ENCODE measurements at regions of chr19 and their contacts with region 1.

Region 1: DNA sequence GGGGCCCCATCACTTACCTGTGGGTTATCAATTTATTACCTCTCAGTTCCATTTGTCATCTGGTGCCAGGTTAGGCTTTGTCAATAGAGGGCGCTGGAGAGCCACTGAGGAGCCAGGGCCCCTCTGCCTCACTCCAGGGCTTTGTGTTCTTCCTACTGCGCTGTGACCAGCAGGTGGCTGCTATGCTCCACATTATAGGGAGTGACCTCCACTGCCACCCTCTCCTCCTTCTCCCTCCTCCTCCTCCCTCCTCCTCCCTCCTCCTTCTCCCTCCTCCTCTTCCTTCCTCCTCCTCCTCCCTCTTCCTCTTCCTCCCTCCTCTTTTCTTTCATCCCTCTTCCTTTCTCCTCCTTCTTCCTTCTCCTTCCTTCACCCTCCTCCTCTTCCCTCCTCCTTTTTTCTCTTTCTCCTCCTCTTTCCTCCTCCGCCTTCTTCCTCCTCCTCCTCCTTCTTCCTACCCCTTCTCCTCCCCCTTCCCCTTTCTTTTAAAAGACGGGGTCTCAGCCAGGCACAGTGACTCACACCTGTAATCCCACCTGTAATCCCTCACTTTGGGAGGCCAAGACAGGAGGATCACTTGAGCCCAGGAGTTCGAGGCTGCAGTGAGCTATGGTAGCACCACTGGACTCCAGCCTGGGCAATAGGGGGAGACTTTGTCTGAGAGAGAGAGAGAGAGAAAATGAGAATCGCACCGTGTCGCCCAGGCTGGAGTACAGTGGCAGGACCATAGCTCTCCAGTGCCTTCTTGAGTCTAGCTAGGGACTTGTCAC is 10.3 kb upstream of the ZBTB32 start:
- H3K4me3 ChIP-seq: no peak overlapping the region
- H3K27ac ChIP-seq: no peak overlapping the region
- H3K4me1 ChIP-seq: no peaks in the 10 kb centered on the region
- CTCF ChIP-seq: peak; percentile 100

Region 2: DNA sequence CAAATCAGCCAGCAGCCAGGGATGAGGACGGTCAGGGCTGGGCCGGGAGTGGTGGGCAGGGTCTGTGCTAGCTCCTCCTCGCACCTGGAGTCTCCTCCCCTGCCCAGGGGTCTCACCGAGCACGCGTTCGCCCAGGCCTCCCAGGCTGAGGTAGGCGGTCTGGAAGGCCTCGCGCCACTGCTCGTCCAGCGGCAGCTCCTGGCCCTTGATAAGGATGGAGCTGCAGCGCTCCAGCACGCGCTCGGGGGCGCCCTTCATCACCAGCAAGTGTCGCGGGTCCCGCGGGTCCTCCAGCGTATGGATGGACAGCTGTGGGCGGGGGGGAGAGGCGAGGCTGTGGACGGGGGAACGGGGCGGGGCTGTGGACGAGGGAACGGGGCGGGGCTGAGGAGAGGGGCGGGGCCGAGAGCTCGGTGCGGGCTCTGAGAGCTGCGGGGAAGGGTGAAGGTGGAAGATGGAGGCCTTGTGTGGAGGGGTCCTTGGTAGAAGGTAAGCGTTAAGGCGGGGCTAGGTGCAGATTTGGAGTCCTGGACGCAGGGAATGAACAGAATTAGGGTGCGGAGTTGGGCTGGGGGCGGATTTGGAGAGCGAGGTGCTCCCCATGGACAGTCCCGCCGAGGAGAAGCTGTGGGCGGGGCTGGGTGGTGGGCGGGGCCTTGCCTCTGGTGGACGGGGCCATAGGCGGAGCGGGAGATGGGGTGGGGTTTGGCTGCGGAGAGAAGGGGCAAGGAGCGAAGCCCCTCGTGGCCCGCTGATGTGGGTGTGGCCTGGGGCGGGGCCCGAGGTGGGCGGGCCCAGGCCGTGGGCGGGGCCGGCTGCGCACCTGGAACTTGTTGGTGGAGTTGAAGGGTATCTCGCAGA is 136.2 kb before region 1 on chr19:
- CTCF ChIA-PET with region 1: interaction called, 16 read pairs
- POLR2A ChIA-PET with region 1: no interaction called
- H3K4me3 ChIP-seq: peak overlapping the region; percentile 22
- H3K27ac ChIP-seq: no peak overlapping the region
- H3K4me1 ChIP-seq: peaks cover 10% of the 10 kb centered on the region
- CTCF ChIP-seq: no peak

Region 3: GRCh38 chr19:35628565-35629331 is 65.3 kb before region 1 on chr19 and contains the start of gene RBM42:
- CTCF ChIA-PET with region 1: no interaction called
- POLR2A ChIA-PET with region 1: no interaction called
- H3K4me3 ChIP-seq: peak within 1 kb of the TSS; percentile 62
- H3K27ac ChIP-seq: peak within 1 kb of the TSS; percentile 83
- H3K4me1 ChIP-seq: peaks cover 13% of the 10 kb centered on the region
- CTCF ChIP-seq: no peak

Region 4: DNA sequence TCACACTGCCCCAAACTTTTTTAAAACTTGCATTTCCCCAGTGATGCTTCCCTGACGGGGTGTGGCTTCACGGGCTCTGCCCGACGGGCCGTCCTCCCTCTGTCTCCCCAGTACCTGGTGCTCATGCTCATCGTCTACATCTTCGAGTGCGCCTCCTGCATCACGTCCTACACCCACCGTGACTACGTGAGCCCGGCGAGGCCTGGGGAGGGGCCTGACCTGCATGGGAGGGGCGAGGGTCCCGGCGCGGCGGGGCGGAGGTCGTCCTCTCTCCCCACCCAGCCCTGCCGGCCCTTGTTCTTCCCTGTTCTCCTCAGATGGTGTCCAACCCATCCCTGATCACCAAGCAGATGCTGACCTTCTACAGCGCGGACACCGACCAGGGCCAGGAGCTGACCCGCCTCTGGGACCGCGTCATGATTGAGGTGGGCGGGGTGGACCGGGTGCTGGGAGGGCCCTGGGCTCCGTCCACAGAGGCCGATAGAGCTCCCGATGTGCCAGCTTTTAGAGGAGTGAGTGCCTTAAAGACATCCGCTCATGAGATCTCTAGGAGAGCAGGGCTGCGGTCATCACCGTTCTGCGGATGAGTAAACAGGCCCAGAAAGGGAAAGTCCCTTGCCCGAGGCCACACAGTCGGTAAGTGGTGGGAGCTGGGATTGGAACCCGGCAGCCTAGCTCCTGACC is 20.8 kb before region 1 on chr19:
- CTCF ChIA-PET with region 1: interaction called, 12 read pairs
- POLR2A ChIA-PET with region 1: interaction called, 6 read pairs
- H3K4me3 ChIP-seq: peak overlapping the region; percentile 33
- H3K27ac ChIP-seq: peak overlapping the region; percentile 41; the same call in 1 of the 2 replicates
- H3K4me1 ChIP-seq: peaks cover 6% of the 10 kb centered on the region
- CTCF ChIP-seq: no peak

Region 5: DNA sequence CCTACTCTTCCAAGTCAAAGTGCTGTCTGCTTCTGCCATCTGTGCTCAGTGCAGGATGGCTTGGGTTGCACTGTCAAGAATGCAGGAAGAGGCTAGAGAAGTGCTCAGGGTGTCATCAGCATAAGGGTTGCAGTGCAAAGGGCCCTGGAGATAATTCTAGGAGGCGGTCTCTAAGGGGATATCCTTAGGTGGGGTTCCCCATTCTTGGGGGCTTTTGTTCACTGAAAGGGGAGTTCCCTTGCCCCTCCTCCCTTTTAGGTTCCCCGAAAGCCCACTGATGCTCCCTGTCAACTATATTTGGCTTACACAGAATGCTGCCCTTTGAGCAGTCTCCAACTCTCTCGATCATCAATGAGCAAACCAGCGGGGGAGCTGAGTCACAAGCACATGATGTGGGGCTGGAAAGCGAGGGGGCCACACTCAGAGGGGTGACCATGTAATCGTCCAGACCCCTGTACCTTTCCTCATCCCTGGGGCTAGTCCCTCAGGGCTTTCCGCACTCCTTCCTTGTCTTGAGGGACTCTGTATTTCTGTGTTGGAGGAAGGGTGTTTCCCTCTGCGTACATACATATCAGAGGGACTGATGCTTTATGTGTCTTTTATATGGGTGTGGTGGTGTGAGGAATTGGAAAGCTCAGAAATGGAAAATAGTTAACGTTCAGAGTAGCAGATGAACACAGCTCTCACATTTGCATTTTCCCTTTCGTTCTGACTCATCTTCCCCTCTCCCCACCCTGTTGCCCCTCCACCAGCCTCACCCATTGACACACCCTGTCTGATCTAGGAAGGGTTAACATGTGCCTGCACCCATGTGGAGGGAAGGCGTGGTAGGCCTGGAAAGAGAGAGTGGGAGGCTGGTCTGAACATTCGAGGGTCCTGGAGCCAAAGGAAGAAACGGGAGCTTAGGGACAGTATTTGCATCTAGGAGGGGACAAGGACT is 17.0 kb after region 1 on chr19:
- CTCF ChIA-PET with region 1: interaction called, 119 read pairs
- POLR2A ChIA-PET with region 1: interaction called, 6 read pairs
- H3K4me3 ChIP-seq: no peak overlapping the region
- H3K27ac ChIP-seq: 0 out of 2 replicates have a peak overlapping the region, but pooled peaks have one; percentile 20
- H3K4me1 ChIP-seq: peaks cover 7% of the 10 kb centered on the region
- CTCF ChIP-seq: no peak

Region 6: GRCh38 chr19:35716801-35717666 is 23.0 kb after region 1 on chr19:
- CTCF ChIA-PET with region 1: interaction called, 119 read pairs
- POLR2A ChIA-PET with region 1: interaction called, 6 read pairs
- H3K4me3 ChIP-seq: peak overlapping the region; percentile 44
- H3K27ac ChIP-seq: peak overlapping the region; percentile 93
- H3K4me1 ChIP-seq: peaks cover 23% of the 10 kb centered on the region
- CTCF ChIP-seq: peak; percentile 100

Region 7: DNA sequence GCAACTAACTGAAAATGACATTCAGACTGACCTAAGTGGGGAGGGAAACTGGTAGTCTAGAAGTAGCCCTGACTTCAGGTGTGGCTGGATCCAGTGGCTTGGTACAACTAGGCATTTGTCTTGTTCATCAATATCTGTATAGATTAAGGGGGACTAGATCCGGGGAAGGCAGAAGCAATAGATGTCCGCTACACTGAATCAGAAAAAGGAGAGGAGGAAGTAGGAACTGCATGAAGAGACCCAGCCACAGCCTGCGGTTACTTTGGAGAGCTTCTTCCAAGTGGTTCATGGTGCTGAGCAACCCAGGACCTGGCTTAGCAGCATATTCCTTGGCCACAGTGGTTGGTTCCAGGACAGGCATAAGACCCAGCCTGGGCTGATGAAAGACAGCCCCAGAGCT is 128.6 kb after region 1 on chr19:
- CTCF ChIA-PET with region 1: interaction called, 25 read pairs
- POLR2A ChIA-PET with region 1: no interaction called
- H3K4me3 ChIP-seq: no peak overlapping the region
- H3K27ac ChIP-seq: no peak overlapping the region
- H3K4me1 ChIP-seq: peaks cover 4% of the 10 kb centered on the region
- CTCF ChIP-seq: no peak

Region 8: DNA sequence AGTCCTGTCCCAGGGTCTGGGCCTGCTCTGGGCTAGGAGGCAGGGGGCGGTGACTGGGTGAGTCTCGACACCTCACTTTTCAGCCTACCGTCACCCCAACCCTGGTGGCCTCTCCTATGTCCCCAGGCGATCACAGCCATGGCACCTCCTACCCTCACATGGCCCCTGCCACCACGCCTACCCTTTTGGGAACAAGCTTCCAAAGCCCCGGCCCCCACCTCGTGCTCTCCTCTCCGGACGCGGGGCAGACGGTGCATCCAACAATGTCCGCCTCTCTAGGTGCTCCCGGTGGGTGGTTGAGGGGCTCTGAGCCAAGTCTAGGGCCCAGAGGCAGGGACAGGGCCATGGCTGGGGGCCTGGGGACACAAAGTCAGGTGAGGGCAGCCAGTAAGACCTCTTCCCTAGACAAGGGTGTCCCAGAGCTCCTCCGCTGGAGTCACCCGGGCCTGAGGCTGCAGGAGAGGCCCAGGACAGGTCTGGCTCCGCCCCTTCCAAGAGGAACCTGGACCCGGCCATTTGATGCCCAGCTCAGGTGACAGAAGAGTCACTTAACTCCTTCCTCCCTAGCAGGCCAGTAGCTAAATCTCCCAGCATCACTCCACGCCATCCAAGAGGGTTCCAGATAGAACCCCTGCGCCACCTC is 314.4 kb after region 1 on chr19 and contains the start of gene SYNE4:
- CTCF ChIA-PET with region 1: no interaction called
- POLR2A ChIA-PET with region 1: no interaction called
- H3K4me3 ChIP-seq: no peak within 1 kb of the TSS
- H3K27ac ChIP-seq: peak within 1 kb of the TSS; percentile 38; the same call in 1 of the 2 replicates
- H3K4me1 ChIP-seq: peaks cover 9% of the 10 kb centered on the region
- CTCF ChIP-seq: no peak

Measured in HEK293 (cell line).